IMR-90 (cell line): ENCODE measurements at regions of chr7 and their contacts with region 1.

Region 1: DNA sequence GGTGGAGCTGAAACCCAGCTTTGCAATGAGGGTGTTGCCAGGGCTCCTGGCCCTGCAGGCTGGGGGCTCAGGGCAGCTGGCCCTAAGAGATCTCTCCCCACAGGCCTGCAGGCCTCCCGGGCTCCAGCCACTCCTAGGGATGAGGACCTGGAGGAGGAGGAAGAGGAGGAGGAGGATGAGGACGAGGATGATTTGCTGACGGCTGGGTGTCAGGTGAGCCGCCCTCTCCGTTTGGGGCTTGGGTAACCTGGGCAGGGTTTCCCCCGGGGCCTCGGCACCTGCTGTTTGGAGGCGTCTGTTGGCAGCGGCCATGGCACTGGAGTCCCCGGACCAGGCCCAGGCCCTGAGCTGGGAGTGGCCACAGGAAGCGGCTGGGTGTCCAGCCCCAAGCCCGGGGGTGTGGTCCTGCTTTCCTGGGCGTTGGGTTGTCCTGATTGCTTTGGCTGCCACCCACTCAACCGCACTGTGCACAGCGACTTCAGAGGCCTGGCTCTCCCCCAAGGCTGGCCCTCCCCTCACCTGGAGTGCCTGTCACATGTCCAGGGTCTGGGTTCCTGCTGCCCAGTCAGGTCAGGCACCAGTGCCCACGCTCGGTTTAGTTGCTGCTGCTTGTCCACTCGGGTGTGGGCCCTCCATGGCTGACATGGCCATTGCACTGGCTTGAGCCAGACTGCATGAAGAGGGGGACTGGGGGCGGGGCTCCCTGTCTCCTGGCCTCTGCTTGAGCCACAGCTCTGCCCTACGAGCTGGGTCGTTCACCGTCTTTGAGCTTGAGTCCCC is 5.9 kb downstream of the ZNF316 start:
- DNase-seq: no peak
- ATAC-seq: no peak
- H3K4me3 ChIP-seq: no peak overlapping the region
- H3K27ac ChIP-seq: no peak overlapping the region
- H3K4me1 ChIP-seq: peaks cover 4% of the 10 kb centered on the region; the same call in 1 of the 2 replicates
- H3K27me3 ChIP-seq: no peaks in the 10 kb centered on the region
- CTCF ChIP-seq: no peak
- POLR2A ChIP-seq: no peak
- RAD21 ChIP-seq: no peak

Region 2: GRCh38 chr7:6718124-6718523 is 75.1 kb after region 1 on chr7:
- CTCF ChIA-PET with region 1: interaction called, 4 read pairs
- POLR2A ChIA-PET with region 1: interaction called, 10 read pairs
- dilution Hi-C with region 1: no loop called
- in situ Hi-C with region 1: no loop called
- intact Hi-C with region 1: no loop called
- DNase-seq: no peak
- ATAC-seq: no peak
- H3K4me3 ChIP-seq: no peak overlapping the region
- H3K27ac ChIP-seq: no peak overlapping the region
- H3K4me1 ChIP-seq: no peaks in the 10 kb centered on the region
- H3K27me3 ChIP-seq: peaks cover 5% of the 10 kb centered on the region; the same call in 1 of the 2 replicates
- CTCF ChIP-seq: no peak
- POLR2A ChIP-seq: no peak
- RAD21 ChIP-seq: no peak